ENCODE measurements at regions of chr11 and their contacts with region 1.

Region 1: GRCh38 chr11:48020092-48020755 is 39.9 kb downstream of the PTPRJ start:
- DNase-seq: no peak
- ATAC-seq: peak; percentile 80
- H3K4me3 Mint-ChIP-seq: peak overlapping the region; percentile 40
- H3K27ac Mint-ChIP-seq: peak overlapping the region; percentile 88
- H3K4me1 Mint-ChIP-seq: peaks cover 79% of the 10 kb centered on the region
- H3K27me3 Mint-ChIP-seq: no peaks in the 10 kb centered on the region
- CTCF ChIP-seq: no peak

Region 2: DNA sequence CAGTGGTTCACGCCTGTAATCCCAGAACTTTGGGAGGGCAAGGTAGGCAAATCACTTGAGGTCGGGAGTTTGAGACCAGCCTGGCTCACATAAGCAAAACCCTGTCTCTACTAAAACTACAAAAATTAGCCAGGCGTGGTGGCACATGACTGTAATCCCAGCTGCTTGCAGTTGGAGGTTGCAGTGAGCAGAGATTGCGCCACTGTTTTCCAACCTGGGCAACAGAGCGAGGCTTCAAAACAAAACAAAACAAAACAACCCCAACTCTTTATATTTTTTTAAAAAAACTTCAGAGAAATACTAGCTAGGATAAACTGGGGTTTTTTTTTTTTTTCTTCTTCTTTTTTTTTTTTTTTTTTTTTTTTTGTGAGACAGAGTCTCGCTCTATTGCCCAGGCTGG is 539.5 kb before region 1 on chr11:
- CTCF ChIA-PET with region 1: no interaction called
- POLR2A ChIA-PET with region 1: no interaction called
- intact Hi-C with region 1: no loop called
- DNase-seq: no peak
- ATAC-seq: no peak
- H3K4me3 Mint-ChIP-seq: no peak overlapping the region
- H3K27ac Mint-ChIP-seq: no peak overlapping the region
- H3K4me1 Mint-ChIP-seq: no peaks in the 10 kb centered on the region
- H3K27me3 Mint-ChIP-seq: no peaks in the 10 kb centered on the region
- CTCF ChIP-seq: no peak

Region 3: GRCh38 chr11:47837292-47837691 is 182.9 kb before region 1 on chr11:
- CTCF ChIA-PET with region 1: no interaction called
- POLR2A ChIA-PET with region 1: no interaction called
- intact Hi-C with region 1: no loop called
- DNase-seq: no peak
- ATAC-seq: no peak
- H3K4me3 Mint-ChIP-seq: no peak overlapping the region
- H3K27ac Mint-ChIP-seq: no peak overlapping the region
- H3K4me1 Mint-ChIP-seq: no peaks in the 10 kb centered on the region
- H3K27me3 Mint-ChIP-seq: no peaks in the 10 kb centered on the region
- CTCF ChIP-seq: no peak

Region 4: GRCh38 chr11:47858169-47858543 is 162.1 kb before region 1 on chr11:
- CTCF ChIA-PET with region 1: interaction called, 8 read pairs
- POLR2A ChIA-PET with region 1: interaction called, 4 read pairs
- intact Hi-C with region 1: loop called (anchors 1 kb)
- DNase-seq: no peak
- ATAC-seq: no peak
- H3K4me3 Mint-ChIP-seq: peak overlapping the region; percentile 66
- H3K27ac Mint-ChIP-seq: peak overlapping the region; percentile 95
- H3K4me1 Mint-ChIP-seq: peaks cover 89% of the 10 kb centered on the region
- H3K27me3 Mint-ChIP-seq: no peaks in the 10 kb centered on the region
- CTCF ChIP-seq: no peak

Region 5: DNA sequence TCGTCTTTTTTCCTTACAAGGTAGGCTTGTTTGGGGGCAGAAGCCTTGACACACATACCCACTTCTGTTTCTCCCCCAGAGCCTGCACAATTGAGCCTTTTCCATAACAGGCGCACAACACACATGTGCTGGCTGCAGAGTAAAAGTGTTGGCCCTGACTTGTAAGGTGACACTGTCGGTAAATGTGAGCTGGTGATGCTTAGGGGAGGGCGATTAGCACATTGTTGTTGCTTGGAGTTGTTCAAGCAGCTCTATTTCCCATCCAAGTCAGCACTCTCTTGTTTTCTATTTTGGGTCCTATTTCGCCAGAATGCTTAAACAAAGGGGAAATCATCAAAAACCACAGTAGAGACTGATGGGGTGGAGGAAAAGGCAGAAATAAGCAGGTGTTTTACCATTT is 91.8 kb before region 1 on chr11:
- CTCF ChIA-PET with region 1: interaction called, 22 read pairs
- POLR2A ChIA-PET with region 1: no interaction called
- intact Hi-C with region 1: no loop called
- DNase-seq: no peak
- ATAC-seq: peak; percentile 37
- H3K4me3 Mint-ChIP-seq: peak overlapping the region; percentile 12
- H3K27ac Mint-ChIP-seq: peak overlapping the region; percentile 30
- H3K4me1 Mint-ChIP-seq: peaks cover 52% of the 10 kb centered on the region
- H3K27me3 Mint-ChIP-seq: no peaks in the 10 kb centered on the region
- CTCF ChIP-seq: no peak

Region 6: GRCh38 chr11:47950396-47950795 is 69.8 kb before region 1 on chr11:
- CTCF ChIA-PET with region 1: interaction called, 3 read pairs
- POLR2A ChIA-PET with region 1: no interaction called
- intact Hi-C with region 1: loop called (anchors 1 kb)
- DNase-seq: peak; percentile 47
- ATAC-seq: peak; percentile 97
- H3K4me3 Mint-ChIP-seq: peak overlapping the region; percentile 26
- H3K27ac Mint-ChIP-seq: peak overlapping the region; percentile 79
- H3K4me1 Mint-ChIP-seq: peaks cover 54% of the 10 kb centered on the region
- H3K27me3 Mint-ChIP-seq: no peaks in the 10 kb centered on the region
- CTCF ChIP-seq: no peak

Region 7: GRCh38 chr11:47980245-47981049 is 39.8 kb before region 1 on chr11 and contains the start of gene PTPRJ:
- CTCF ChIA-PET with region 1: interaction called, 4 read pairs
- POLR2A ChIA-PET with region 1: interaction called, 5 read pairs
- intact Hi-C with region 1: loop called (anchors 1 kb)
- DNase-seq: peak; percentile 71
- ATAC-seq: peak; percentile 66
- H3K4me3 Mint-ChIP-seq: peak within 1 kb of the TSS; percentile 86
- H3K27ac Mint-ChIP-seq: peak within 1 kb of the TSS; percentile 2
- H3K4me1 Mint-ChIP-seq: peaks cover 33% of the 10 kb centered on the region
- H3K27me3 Mint-ChIP-seq: no peaks in the 10 kb centered on the region
- CTCF ChIP-seq: no peak
- total RNA-seq, gene PTPRJ: 18.8 and 19.2 TPM in 2 replicates

Region 8: GRCh38 chr11:48006301-48006992 is 13.8 kb before region 1 on chr11:
- CTCF ChIA-PET with region 1: interaction called, 6 read pairs
- POLR2A ChIA-PET with region 1: interaction called, 18 read pairs
- intact Hi-C with region 1: loop called (anchors 1 kb)
- DNase-seq: no peak
- ATAC-seq: peak; percentile 49
- H3K4me3 Mint-ChIP-seq: no peak overlapping the region
- H3K27ac Mint-ChIP-seq: peak overlapping the region; percentile 79
- H3K4me1 Mint-ChIP-seq: peaks cover 64% of the 10 kb centered on the region
- H3K27me3 Mint-ChIP-seq: no peaks in the 10 kb centered on the region
- CTCF ChIP-seq: no peak

Region 9: GRCh38 chr11:48031602-48032001 is 11.4 kb after region 1 on chr11:
- CTCF ChIA-PET with region 1: interaction called, 6 read pairs
- POLR2A ChIA-PET with region 1: interaction called, 14 read pairs
- intact Hi-C with region 1: loop called (anchors 1 kb)
- DNase-seq: no peak
- ATAC-seq: peak; percentile 60
- H3K4me3 Mint-ChIP-seq: no peak overlapping the region
- H3K27ac Mint-ChIP-seq: peak overlapping the region; percentile 85
- H3K4me1 Mint-ChIP-seq: peaks cover 61% of the 10 kb centered on the region
- H3K27me3 Mint-ChIP-seq: no peaks in the 10 kb centered on the region
- CTCF ChIP-seq: no peak

Region 10: DNA sequence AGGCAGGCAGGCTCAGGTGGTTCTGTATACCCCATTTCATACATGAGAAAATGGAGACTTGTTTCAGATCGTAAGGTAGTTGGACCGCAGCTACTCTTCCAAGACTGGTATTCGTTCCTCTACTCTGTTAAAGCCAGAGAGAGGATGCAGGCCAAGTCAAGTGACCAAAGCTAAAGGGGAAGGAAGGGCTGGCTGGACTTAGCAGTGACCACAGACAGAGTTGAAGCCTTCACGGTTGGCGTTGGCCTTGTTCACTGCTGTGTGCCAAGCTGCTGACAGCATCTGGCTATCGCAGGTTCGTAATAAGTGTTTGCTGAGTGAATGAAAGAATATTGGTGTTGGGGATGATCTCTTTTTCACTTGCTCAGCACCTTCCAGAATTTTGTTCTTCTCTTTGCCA is 24.4 kb after region 1 on chr11:
- CTCF ChIA-PET with region 1: no interaction called
- POLR2A ChIA-PET with region 1: no interaction called
- intact Hi-C with region 1: no loop called
- DNase-seq: no peak
- ATAC-seq: no peak
- H3K4me3 Mint-ChIP-seq: no peak overlapping the region
- H3K27ac Mint-ChIP-seq: peak overlapping the region; percentile 67
- H3K4me1 Mint-ChIP-seq: peaks cover 69% of the 10 kb centered on the region
- H3K27me3 Mint-ChIP-seq: no peaks in the 10 kb centered on the region
- CTCF ChIP-seq: no peak

Region 11: DNA sequence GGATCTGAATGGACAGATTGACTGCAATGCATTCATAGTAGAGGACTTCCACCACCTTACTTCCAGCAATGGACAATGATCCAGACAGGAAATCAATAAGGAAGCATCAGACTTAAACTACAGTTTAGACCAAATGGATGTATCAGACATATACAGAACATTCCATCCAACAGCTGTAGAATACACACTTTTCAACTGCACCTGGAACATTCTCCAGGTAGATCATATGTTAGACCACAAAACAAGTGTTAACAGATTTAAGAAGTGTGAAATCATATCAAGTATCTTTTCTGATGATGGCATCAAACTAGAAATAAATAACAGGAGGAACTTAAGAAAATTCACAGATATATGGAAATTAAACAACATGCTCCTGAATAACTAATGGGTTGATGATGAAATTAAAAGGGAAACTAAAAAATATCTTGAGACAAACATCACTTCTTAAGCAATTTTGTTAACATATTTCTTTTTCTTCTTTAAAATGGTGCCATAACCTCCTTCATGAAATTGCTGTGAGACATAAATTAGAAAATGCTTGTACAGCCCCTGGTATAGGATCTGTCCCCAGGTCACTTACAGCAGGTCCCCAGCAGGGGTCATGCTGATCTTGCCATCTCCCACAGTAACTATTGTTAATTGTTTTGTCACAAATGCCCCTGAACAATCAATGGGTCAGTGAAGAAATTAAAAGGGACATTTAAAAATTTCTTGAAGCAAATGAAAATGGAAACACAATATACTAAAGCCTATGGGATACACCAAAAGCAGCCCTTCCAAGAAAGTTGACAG is 96.4 kb after region 1 on chr11:
- CTCF ChIA-PET with region 1: no interaction called
- POLR2A ChIA-PET with region 1: no interaction called
- intact Hi-C with region 1: no loop called
- DNase-seq: no peak
- ATAC-seq: peak; percentile 61
- H3K4me3 Mint-ChIP-seq: no peak overlapping the region
- H3K27ac Mint-ChIP-seq: no peak overlapping the region
- H3K4me1 Mint-ChIP-seq: peaks cover 9% of the 10 kb centered on the region
- H3K27me3 Mint-ChIP-seq: no peaks in the 10 kb centered on the region
- CTCF ChIP-seq: no peak

Measured in activated B cell treated with CpG ODN at 0.5 μM for 24 hours (primary cell).